Activated CD4-positive, alpha-beta memory T cell treated with anti-CD3 and anti-CD28 coated beads, Interleukin-2, amount 10 ng/mL, durations not matched to agents 7 days and 5 days (primary cell): ENCODE measurements at regions of chr20 and their contacts with region 1.

Region 1: GRCh38 chr20:33992923-33993575 is 662 bp upstream of the RALY start:
- DNase-seq: peak; percentile 100
- H3K4me3 Mint-ChIP-seq: peak overlapping the region; percentile 97
- H3K27ac Mint-ChIP-seq: peak overlapping the region; percentile 98
- H3K4me1 Mint-ChIP-seq: peaks cover 51% of the 10 kb centered on the region
- H3K27me3 Mint-ChIP-seq: no peaks in the 10 kb centered on the region

Region 2: GRCh38 chr20:33810885-33811777 is 181.9 kb before region 1 on chr20 and contains the start of gene CHMP4B:
- CTCF ChIA-PET with region 1: no interaction called
- POLR2A ChIA-PET with region 1: interaction called, 17 read pairs
- DNase-seq: peak; percentile 99
- H3K4me3 Mint-ChIP-seq: peak within 1 kb of the TSS; percentile 96
- H3K27ac Mint-ChIP-seq: peak within 1 kb of the TSS; percentile 88
- H3K4me1 Mint-ChIP-seq: peaks cover 33% of the 10 kb centered on the region
- H3K27me3 Mint-ChIP-seq: no peaks in the 10 kb centered on the region
- total RNA-seq, gene CHMP4B: 86.7 to 86.9 TPM

Region 3: DNA sequence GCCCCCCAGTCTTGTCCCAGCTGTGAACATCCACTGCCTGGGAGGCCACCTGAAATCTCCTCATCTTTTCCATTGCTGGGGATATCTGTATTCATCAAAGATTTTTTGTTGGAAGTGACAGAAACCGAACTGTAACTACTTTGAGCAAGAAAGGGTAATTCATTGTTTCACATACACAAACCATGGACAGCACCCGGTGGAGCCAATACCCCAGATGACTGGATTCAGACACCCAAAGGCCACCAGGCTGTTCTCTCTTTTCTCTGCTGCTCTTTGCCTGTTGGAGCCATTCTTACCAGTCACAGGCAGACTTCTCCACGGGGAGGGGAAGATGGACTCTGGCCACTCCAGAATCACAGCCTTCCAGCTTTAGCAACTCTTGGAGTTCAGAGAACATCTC is 11.1 kb before region 1 on chr20:
- CTCF ChIA-PET with region 1: no interaction called
- POLR2A ChIA-PET with region 1: interaction called, 15 read pairs
- DNase-seq: no peak
- H3K4me3 Mint-ChIP-seq: no peak overlapping the region
- H3K27ac Mint-ChIP-seq: no peak overlapping the region
- H3K4me1 Mint-ChIP-seq: no peaks in the 10 kb centered on the region
- H3K27me3 Mint-ChIP-seq: peaks cover 19% of the 10 kb centered on the region

Region 4: GRCh38 chr20:34010405-34010931 is 17.4 kb after region 1 on chr20:
- CTCF ChIA-PET with region 1: interaction called, 3 read pairs
- POLR2A ChIA-PET with region 1: interaction called, 12 read pairs
- DNase-seq: no peak
- H3K4me3 Mint-ChIP-seq: no peak overlapping the region
- H3K27ac Mint-ChIP-seq: no peak overlapping the region
- H3K4me1 Mint-ChIP-seq: peaks cover 58% of the 10 kb centered on the region
- H3K27me3 Mint-ChIP-seq: no peaks in the 10 kb centered on the region

Region 5: GRCh38 chr20:34069341-34070078 is 76.5 kb after region 1 on chr20:
- CTCF ChIA-PET with region 1: interaction called, 3 read pairs
- POLR2A ChIA-PET with region 1: interaction called, 11 read pairs
- DNase-seq: peak; percentile 62
- H3K4me3 Mint-ChIP-seq: no peak overlapping the region
- H3K27ac Mint-ChIP-seq: no peak overlapping the region
- H3K4me1 Mint-ChIP-seq: peaks cover 20% of the 10 kb centered on the region
- H3K27me3 Mint-ChIP-seq: no peaks in the 10 kb centered on the region